GM12878 (cell line): ENCODE measurements at regions of chr14 and their contacts with region 1.

Region 1: DNA sequence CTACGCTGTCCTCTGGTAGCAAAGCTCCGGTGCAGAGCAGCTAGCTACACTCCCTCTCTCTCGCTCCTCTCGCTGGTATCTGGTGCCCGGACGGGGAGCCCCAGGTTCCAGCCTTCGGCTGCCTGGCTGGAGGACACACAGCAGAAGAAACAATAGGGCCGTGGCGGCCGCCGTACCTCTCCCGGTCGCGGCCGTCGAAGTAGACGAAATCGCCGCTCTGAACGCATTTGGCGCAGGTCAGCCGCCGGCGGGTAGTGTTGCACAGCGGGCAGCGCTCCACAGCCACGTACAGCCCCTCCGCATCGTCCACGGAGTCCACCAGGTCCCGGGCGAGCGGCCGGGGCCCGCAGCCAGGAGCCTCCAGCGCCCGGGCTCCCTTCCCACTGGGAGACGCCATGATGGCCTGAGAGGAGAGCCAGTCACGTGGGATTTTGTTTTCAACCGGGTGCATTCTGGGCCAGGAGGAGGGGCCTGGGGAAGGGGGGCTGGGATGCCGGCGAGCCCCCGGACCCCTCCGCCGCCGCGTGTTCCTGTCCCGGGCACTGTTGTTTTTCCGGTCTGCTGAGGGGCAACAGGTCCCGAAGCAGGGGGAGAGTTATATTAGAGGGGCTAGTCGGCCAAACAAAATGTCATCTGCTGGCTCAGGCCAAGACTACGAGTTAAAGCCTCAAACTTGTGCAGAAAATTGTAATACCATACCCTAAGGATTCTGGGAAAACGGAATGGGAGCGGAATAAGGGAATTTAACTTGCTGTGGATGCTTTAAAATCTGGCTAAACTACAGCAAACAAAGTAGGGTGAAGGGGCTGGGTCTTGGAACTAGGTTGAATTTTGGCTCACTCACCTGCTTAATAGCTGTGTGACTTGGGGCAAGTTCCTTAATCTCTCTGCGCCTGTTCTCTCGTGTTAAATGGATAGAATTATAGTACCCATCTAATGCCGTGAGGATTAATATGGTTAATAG is at the start of gene ATG14:
- DNase-seq: peak; percentile 12
- ATAC-seq: peak; percentile 100
- H3K4me3 ChIP-seq: peak within 1 kb of the TSS; percentile 81
- H3K27ac ChIP-seq: peak within 1 kb of the TSS; percentile 53
- H3K4me1 ChIP-seq: peaks cover 3% of the 10 kb centered on the region
- H3K27me3 ChIP-seq: no peaks in the 10 kb centered on the region
- CTCF ChIP-seq: no peak
- EP300 ChIP-seq: peak in 1 of 2 experiments; percentile 11; a peak in 1 of 4 replicates
- POLR2A ChIP-seq: peak; percentile 89
- RAD21 ChIP-seq: no peak
- polyA plus RNA-seq, gene ATG14: 1.1 to 1.4 TPM

Region 2: GRCh38 chr14:55221186-55221585 is 190.5 kb before region 1 on chr14:
- CTCF ChIA-PET with region 1: no interaction called
- POLR2A ChIA-PET with region 1: interaction called, 10 read pairs
- RAD21 ChIA-PET with region 1: no interaction called
- SMC1A ChIA-PET with region 1: no interaction called
- in situ Hi-C with region 1: no loop called
- intact Hi-C with region 1: no loop called
- DNase-seq: no peak
- ATAC-seq: no peak
- H3K4me3 ChIP-seq: no peak overlapping the region
- H3K27ac ChIP-seq: no peak overlapping the region
- H3K4me1 ChIP-seq: no peaks in the 10 kb centered on the region
- H3K27me3 ChIP-seq: no peaks in the 10 kb centered on the region
- CTCF ChIP-seq: no peak
- EP300 ChIP-seq: no peak
- POLR2A ChIP-seq: no peak
- RAD21 ChIP-seq: no peak

Region 3: GRCh38 chr14:55458800-55459515 is 47.2 kb after region 1 on chr14:
- CTCF ChIA-PET with region 1: no interaction called
- POLR2A ChIA-PET with region 1: no interaction called
- RAD21 ChIA-PET with region 1: no interaction called
- SMC1A ChIA-PET with region 1: no interaction called
- in situ Hi-C with region 1: no loop called
- intact Hi-C with region 1: no loop called
- DNase-seq: no peak
- ATAC-seq: peak; percentile 93
- H3K4me3 ChIP-seq: no peak overlapping the region
- H3K27ac ChIP-seq: no peak overlapping the region
- H3K4me1 ChIP-seq: peaks cover 5% of the 10 kb centered on the region; the same call in 1 of the 2 replicates
- H3K27me3 ChIP-seq: no peaks in the 10 kb centered on the region
- CTCF ChIP-seq: no peak
- EP300 ChIP-seq: peak; percentile 61 to 79; a peak in 3 of 4 replicates
- POLR2A ChIP-seq: no peak
- RAD21 ChIP-seq: no peak